ENCODE measurements at regions of chr17 and their contacts with region 1.

Region 1: GRCh38 chr17:50200457-50201275 is 765 bp downstream of the COL1A1 start:
- DNase-seq: peak; percentile 95
- H3K4me3 ChIP-seq: peak overlapping the region; percentile 74 to 96
- H3K27ac ChIP-seq: peak overlapping the region; percentile 79 to 100
- H3K4me1 ChIP-seq: peaks cover 37 to 62% of the 10 kb centered on the region in 2 experiments
- H3K27me3 ChIP-seq: no peaks in the 10 kb centered on the region
- CTCF ChIP-seq: peak; percentile 100
- EP300 ChIP-seq: peak in 1 of 2 experiments; percentile 63; a peak in 2 of 4 replicates
- RAD21 ChIP-seq: peak; percentile 87

Region 2: GRCh38 chr17:50043290-50044148 is 157.1 kb before region 1 on chr17:
- CTCF ChIA-PET with region 1: no interaction called
- POLR2A ChIA-PET with region 1: no interaction called
- DNase-seq: no peak
- H3K4me3 ChIP-seq: no peak overlapping the region
- H3K27ac ChIP-seq: 0 out of 4 replicates have a peak overlapping the region, but pooled peaks of 1 of the 2 experiments have one; percentile 12
- H3K4me1 ChIP-seq: peaks cover 0 to 23% of the 10 kb centered on the region in 2 experiments; a peak in 3 of 4 replicates
- H3K27me3 ChIP-seq: no peaks in the 10 kb centered on the region
- CTCF ChIP-seq: no peak
- EP300 ChIP-seq: no peak
- RAD21 ChIP-seq: no peak

Region 3: DNA sequence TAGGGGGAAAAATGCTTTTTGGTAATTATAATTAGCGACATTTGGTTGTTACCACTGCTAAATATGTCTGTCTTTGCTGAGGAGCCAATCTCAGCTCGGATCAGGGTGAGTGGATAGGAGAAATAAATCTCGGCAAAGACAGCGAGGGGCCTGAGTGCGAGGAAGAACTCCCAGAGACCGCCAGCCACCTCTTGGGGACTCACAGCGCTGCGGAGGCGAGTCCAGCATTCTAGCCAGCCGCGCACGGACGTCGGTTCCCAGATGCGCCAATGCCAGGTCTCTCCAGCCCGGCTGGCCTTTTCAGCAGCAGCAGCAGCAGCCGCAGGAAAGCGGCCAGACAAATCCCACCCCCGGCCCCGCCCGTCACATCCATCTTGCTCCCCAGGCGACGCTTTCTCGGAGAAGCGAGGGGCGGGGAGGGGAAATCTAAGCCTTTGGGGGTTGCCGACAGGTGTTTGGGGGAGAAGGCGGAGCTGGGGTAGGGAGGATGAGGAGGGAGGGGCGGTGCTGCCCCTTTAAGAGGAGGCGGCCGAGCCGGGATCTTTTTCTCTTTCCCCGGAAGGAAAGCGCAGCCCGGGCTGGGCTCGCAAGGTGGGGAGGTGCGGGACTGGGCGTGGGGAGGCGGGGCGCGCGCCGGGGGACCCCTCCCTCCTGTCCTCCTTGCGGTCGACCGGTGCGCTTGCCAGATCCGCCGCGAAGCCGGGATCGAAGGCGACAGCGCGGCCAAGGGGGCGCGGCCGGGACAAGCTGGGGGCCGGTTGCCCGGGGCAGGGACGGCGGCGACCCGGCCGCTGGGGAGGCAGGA is 145.0 kb before region 1 on chr17 and contains the start of gene ITGA3:
- CTCF ChIA-PET with region 1: no interaction called
- POLR2A ChIA-PET with region 1: no interaction called
- DNase-seq: peak; percentile 93
- H3K4me3 ChIP-seq: peak within 1 kb of the TSS; percentile 90 to 91
- H3K27ac ChIP-seq: peak within 1 kb of the TSS; percentile 90 to 100
- H3K4me1 ChIP-seq: peaks cover 64 to 65% of the 10 kb centered on the region in 2 experiments
- H3K27me3 ChIP-seq: no peaks in the 10 kb centered on the region
- CTCF ChIP-seq: no peak; the same call in 1 of the 2 replicates
- EP300 ChIP-seq: peak in 1 of 2 experiments; percentile 66; a peak in 1 of 4 replicates
- RAD21 ChIP-seq: peak; percentile 2; the same call in 1 of the 2 replicates
- polyA plus RNA-seq, gene ITGA3: 543 and 766 TPM in 2 replicates

Region 4: GRCh38 chr17:50151041-50151936 is 49.4 kb before region 1 on chr17:
- CTCF ChIA-PET with region 1: interaction called, 24 read pairs
- POLR2A ChIA-PET with region 1: no interaction called
- DNase-seq: peak; percentile 99
- H3K4me3 ChIP-seq: peak overlapping the region; percentile 66 to 81
- H3K27ac ChIP-seq: peak overlapping the region; percentile 74 to 98
- H3K4me1 ChIP-seq: peaks cover 39 to 60% of the 10 kb centered on the region in 2 experiments; a peak in 3 of 4 replicates
- H3K27me3 ChIP-seq: no peaks in the 10 kb centered on the region
- CTCF ChIP-seq: peak; percentile 63
- EP300 ChIP-seq: peak in 1 of 2 experiments; percentile 34; a peak in 1 of 4 replicates
- RAD21 ChIP-seq: peak; percentile 19; the same call in 1 of the 2 replicates

Region 5: GRCh38 chr17:50189550-50190292 is 10.9 kb before region 1 on chr17:
- CTCF ChIA-PET with region 1: interaction called, 26 read pairs
- POLR2A ChIA-PET with region 1: no interaction called
- DNase-seq: no peak
- H3K4me3 ChIP-seq: no peak overlapping the region
- H3K27ac ChIP-seq: peak overlapping the region in 1 of 2 experiments; percentile 100; a peak in 2 of 4 replicates
- H3K4me1 ChIP-seq: peaks cover 3 to 18% of the 10 kb centered on the region in 2 experiments; a peak in 2 of 4 replicates
- H3K27me3 ChIP-seq: no peaks in the 10 kb centered on the region
- CTCF ChIP-seq: no peak
- EP300 ChIP-seq: no peak
- RAD21 ChIP-seq: no peak

Region 6: DNA sequence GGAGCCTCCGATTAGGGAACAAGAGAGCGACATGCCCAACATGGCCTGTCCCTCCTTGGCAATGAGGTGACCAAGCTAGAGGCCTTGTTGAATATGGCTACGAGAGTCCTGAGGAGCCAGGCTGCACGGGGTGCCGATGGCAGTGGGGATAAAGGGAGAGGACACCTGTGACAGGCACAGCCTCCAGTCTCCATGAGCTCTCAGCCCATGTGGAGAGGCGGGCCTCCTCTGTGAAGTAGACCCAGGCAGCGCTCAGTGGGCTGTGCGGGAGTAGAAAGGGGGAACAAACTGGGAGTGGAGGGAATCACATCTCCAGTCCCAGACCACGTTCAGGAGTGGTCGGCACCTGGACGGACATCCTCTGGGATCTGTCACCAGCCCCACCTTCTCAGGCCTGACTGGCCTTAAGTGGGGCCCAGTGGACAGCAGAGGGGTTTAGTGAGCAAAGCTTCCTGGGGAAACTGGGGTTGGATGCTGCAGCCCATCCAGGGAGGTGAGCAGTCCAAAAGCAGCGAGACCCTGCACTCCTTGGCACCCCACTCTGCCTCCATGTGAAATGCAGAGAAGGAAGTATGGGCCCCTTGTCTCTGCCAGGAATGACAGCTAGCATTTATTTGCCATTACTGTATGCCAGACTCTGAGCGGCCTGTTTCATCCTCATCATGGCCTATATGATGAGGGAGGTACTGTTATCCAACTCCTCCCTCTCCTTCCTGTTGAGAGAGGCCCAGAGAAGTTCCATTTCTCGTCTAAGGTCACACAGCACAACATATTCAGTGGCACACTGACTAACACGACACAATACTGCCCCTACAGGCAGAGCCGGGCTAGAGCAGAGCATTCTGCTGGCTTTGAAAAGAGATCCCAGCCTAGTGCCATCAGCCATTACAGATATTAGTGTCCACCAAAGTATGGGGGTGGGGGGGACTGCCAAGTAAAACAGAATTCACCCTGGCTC is 69.1 kb after region 1 on chr17:
- CTCF ChIA-PET with region 1: interaction called, 2,150 read pairs
- POLR2A ChIA-PET with region 1: interaction called, 4 read pairs
- DNase-seq: peak; percentile 87
- H3K4me3 ChIP-seq: no peak overlapping the region
- H3K27ac ChIP-seq: peak overlapping the region in 1 of 2 experiments; percentile 42; a peak in 1 of 4 replicates
- H3K4me1 ChIP-seq: peaks cover 35 to 53% of the 10 kb centered on the region in 2 experiments; a peak in 3 of 4 replicates
- H3K27me3 ChIP-seq: no peaks in the 10 kb centered on the region
- CTCF ChIP-seq: peak; percentile 99
- EP300 ChIP-seq: no peak
- RAD21 ChIP-seq: peak; percentile 97

Region 7: GRCh38 chr17:50318501-50319285 is 118.0 kb after region 1 on chr17:
- CTCF ChIA-PET with region 1: interaction called, 2,150 read pairs
- POLR2A ChIA-PET with region 1: no interaction called
- DNase-seq: no peak
- H3K4me3 ChIP-seq: no peak overlapping the region
- H3K27ac ChIP-seq: no peak overlapping the region
- H3K4me1 ChIP-seq: no peaks in the 10 kb centered on the region; a peak in 1 of 4 replicates
- H3K27me3 ChIP-seq: no peaks in the 10 kb centered on the region
- CTCF ChIP-seq: no peak
- EP300 ChIP-seq: no peak
- RAD21 ChIP-seq: no peak

Region 8: DNA sequence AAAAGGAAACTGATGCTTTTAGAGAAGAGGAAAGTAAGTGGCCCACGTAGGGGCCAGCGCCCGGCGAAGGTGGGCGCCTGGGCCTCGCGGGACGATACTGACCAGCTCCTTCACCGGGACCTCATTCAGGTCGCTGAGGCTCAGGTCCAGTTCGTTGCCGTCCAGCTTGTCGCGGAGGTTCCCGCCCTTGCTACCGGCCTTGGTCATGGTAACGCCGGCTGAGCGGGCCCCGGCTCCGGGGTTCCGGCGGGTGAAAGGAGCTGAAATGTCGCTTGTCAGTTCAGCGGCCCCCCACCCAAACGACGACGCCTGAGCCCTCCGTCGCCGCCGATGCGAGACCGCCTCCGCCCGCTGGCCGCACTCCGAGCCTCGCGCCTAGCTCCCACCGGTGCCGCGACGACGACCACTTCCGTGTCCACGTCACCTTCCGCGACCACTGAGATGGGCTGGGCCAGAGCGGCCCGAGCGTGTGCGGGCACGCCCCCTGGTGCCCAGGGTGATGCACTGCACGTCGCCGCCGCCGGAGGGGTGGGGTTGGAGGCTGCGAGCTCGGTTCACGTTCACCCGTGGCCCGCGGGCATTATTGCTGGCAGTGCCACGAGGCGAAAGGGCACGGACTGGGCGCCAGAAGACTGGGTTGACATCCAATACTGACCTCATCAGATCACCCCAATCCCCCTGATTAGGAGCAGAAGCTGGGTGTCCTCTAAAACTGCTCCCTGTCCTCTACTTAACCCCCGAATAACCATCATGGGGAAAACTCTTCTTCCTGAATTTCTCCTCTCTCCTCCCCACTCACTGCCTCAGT is 196.6 kb after region 1 on chr17 and contains the start of gene LRRC59:
- CTCF ChIA-PET with region 1: interaction called, 15 read pairs
- POLR2A ChIA-PET with region 1: no interaction called
- DNase-seq: peak; percentile 99
- H3K4me3 ChIP-seq: peak within 1 kb of the TSS; percentile 91 to 99
- H3K27ac ChIP-seq: peak within 1 kb of the TSS; percentile 74 to 83
- H3K4me1 ChIP-seq: peaks cover 10 to 23% of the 10 kb centered on the region in 2 experiments
- H3K27me3 ChIP-seq: no peaks in the 10 kb centered on the region; the same call in 1 of the 2 replicates
- CTCF ChIP-seq: peak; percentile 95
- EP300 ChIP-seq: no peak
- RAD21 ChIP-seq: peak; percentile 42; the same call in 1 of the 2 replicates
- polyA plus RNA-seq, gene LRRC59: 122 and 137 TPM in 2 replicates